PC-3 (cell line): ENCODE measurements at regions of chrX and their contacts with region 1.

Region 1: DNA sequence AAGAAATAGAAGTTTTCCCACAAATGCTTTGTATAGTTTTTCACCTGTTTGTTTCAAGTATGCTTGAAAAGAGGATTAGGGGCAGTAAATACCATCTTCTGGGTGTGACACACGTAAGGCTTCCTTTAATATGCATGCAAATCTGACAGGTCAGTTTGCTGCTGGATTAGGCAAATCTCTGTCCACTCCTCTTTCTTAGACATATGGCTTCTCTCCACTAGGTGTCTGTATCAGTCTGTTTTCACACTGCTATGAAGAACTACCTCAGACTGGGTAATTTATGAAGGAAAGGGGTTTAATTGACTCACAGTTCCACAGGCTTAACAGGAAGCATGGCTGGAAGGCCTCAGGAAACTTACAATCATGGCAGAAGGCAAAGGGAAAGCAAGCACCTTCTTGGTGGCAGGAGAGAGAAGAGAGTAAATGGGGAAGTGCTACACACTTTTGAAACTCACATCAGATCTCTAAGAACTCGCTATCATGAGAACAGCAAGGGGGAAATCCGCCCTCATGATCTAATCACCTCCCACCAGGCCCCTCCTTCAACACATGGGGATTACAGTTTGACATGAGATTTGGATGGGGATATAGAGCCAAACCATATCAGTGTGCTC is 66.9 kb downstream of the TAB3 start:
- DNase-seq: peak; percentile 28
- ATAC-seq: peak; percentile 42; the same call in 1 of the 2 replicates
- H3K4me3 ChIP-seq: no peak overlapping the region
- H3K27ac ChIP-seq: no peak overlapping the region
- H3K4me1 ChIP-seq: no peaks in the 10 kb centered on the region
- H3K27me3 ChIP-seq: 0 out of 2 replicates have a peak, but pooled peaks cover 3% of the 10 kb centered on the region
- CTCF ChIP-seq: peak; percentile 38; the same call in 1 of the 2 replicates

Region 2: GRCh38 chrX:30635630-30636029 is 186.5 kb before region 1 on chrX:
- CTCF ChIA-PET with region 1: no interaction called
- POLR2A ChIA-PET with region 1: no interaction called
- intact Hi-C with region 1: loop called (anchors 10 kb)
- DNase-seq: peak; percentile 51
- ATAC-seq: no peak
- H3K4me3 ChIP-seq: no peak overlapping the region
- H3K27ac ChIP-seq: no peak overlapping the region
- H3K4me1 ChIP-seq: no peaks in the 10 kb centered on the region
- H3K27me3 ChIP-seq: no peaks in the 10 kb centered on the region
- CTCF ChIP-seq: peak; percentile 62

Region 3: DNA sequence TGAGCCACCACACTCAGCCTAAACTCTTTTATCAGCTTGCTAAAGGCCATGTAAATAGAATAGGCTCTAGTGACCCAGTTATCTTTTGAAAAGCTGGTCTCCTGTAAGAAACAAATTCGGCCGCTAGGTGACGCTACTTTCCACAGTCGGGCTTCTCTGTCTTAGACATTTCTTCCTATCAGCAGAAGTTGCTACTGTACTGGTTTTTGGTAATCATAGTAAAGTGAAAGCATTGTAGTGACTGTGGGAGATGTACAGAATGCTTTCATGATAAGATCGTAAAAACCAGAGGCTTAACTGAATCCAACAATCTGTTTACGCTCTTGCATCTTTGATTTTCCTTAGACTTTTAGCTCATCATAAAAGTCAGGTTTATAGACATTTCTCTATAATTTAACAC is 86.3 kb before region 1 on chrX:
- CTCF ChIA-PET with region 1: no interaction called
- POLR2A ChIA-PET with region 1: no interaction called
- intact Hi-C with region 1: loop called (anchors 1 kb)
- DNase-seq: peak; percentile 84
- ATAC-seq: peak; percentile 81
- H3K4me3 ChIP-seq: no peak overlapping the region
- H3K27ac ChIP-seq: no peak overlapping the region
- H3K4me1 ChIP-seq: no peaks in the 10 kb centered on the region
- H3K27me3 ChIP-seq: no peaks in the 10 kb centered on the region
- CTCF ChIP-seq: peak; percentile 88

Region 4: DNA sequence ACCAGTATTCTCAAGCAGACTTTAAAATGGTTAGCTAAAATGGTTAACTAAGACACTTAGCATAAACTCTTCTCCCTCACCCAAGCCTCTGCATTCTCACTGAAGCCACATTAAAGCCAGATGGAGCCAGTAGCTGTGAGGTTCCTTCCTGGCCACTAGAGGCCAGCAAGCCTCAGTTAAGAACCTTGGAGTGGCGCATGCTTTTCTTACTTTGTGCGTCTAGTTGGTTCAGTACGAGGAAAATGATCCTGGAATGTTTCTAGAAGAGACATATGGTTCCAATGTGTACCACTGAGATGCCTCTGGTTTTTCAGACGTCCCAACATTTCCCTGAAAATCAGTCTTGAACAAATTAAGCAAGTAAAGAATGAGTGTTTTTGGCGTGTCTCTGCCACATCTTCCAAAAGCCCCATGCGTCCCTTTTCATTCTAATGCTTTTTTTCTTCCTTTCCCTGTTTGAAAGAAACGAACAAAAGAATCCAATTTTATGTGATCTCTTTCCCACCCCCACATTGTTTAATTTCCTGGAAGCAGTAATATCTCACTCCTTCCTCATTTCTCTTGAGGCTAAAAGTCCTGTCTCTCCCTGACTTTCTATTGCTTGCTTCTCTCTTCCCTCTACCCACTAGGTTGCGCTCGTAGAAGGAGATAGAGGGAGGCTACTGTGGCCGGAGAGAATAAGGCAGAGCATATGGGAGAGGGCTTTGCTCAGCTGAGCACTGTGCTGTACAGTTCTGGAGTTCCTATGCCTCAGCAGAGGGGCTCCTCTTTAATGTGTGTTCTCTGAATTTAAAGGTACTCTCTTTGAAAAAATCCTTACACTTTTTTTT is 149.8 kb after region 1 on chrX:
- CTCF ChIA-PET with region 1: no interaction called
- POLR2A ChIA-PET with region 1: no interaction called
- intact Hi-C with region 1: loop called (anchors 10 kb)
- DNase-seq: peak; percentile 61
- ATAC-seq: peak; percentile 88
- H3K4me3 ChIP-seq: peak overlapping the region; percentile 31; the same call in 1 of the 2 replicates
- H3K27ac ChIP-seq: no peak overlapping the region
- H3K4me1 ChIP-seq: no peaks in the 10 kb centered on the region
- H3K27me3 ChIP-seq: 0 out of 2 replicates have a peak, but pooled peaks cover 8% of the 10 kb centered on the region
- CTCF ChIP-seq: peak; percentile 72